Panc1 (cell line): ENCODE measurements at regions of chr11 and their contacts with region 1.

Region 1: GRCh38 chr11:35237860-35238715 is 99.1 kb downstream of the CD44 start:
- DNase-seq: no peak
- ATAC-seq: no peak
- H3K4me3 ChIP-seq: no peak overlapping the region
- H3K27ac ChIP-seq: peak overlapping the region; percentile 25
- H3K4me1 ChIP-seq: no peaks in the 10 kb centered on the region; the same call in 1 of the 2 replicates
- H3K27me3 ChIP-seq: no peaks in the 10 kb centered on the region
- CTCF ChIP-seq: peak; percentile 85

Region 2: DNA sequence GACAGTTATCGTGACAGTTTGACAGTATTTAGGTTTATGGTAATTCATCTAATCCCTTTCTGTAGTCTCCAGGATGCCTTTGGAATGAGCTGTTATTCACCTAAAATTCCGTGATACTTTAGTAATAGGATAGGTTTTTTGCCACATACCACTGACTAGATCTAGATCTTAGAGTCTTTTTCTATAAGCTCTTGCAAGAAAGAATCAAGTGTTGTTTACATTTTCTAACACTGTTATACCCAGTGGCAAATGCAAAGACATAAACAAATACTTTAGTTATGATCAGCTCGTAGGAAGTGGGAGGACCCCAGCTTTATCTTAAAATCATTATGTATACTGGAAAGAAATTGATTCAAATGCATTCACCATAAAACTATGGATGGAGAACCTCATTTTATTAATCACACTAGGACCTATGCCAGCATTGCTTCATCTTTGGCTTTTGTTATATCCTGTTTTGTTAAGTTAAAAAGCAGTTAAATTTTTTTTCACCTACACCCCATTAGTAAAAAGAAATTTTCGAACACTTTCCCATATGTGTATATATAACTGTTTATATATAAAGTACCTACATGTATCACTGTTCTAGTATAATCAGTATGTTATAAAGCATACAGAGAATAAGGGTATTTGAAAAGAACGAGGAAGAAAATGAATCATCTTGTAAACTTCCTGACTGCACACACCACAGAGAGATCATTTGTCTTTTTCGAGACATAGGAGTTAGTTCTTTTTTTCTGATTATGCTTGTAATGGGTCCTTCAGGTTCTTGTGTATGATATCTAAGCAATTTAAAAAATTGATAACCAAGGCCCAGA is 260.8 kb before region 1 on chr11:
- CTCF ChIA-PET with region 1: no interaction called
- POLR2A ChIA-PET with region 1: no interaction called
- in situ Hi-C with region 1: no loop called
- intact Hi-C with region 1: no loop called
- DNase-seq: peak; percentile 92
- ATAC-seq: peak; percentile 88
- H3K4me3 ChIP-seq: peak overlapping the region in 1 of 2 experiments; percentile 2; a peak in 1 of 4 replicates
- H3K27ac ChIP-seq: peak overlapping the region; percentile 100
- H3K4me1 ChIP-seq: peaks cover 46% of the 10 kb centered on the region
- H3K27me3 ChIP-seq: no peaks in the 10 kb centered on the region
- CTCF ChIP-seq: no peak

Region 3: GRCh38 chr11:34997952-34998528 is 240.0 kb before region 1 on chr11:
- CTCF ChIA-PET with region 1: no interaction called
- POLR2A ChIA-PET with region 1: no interaction called
- in situ Hi-C with region 1: no loop called
- intact Hi-C with region 1: loop called (anchors 10 kb)
- DNase-seq: no peak
- ATAC-seq: peak; percentile 65
- H3K4me3 ChIP-seq: no peak overlapping the region
- H3K27ac ChIP-seq: peak overlapping the region; percentile 91
- H3K4me1 ChIP-seq: peaks cover 21% of the 10 kb centered on the region
- H3K27me3 ChIP-seq: no peaks in the 10 kb centered on the region
- CTCF ChIP-seq: peak; percentile 49; the same call in 1 of the 2 replicates